Transverse colon (tissue), 4 donors: ENCODE measurements at regions of chr1 and their contacts with region 1.

Region 1: GRCh38 chr1:29197585-29197924 is 15.9 kb upstream of the SRSF4 start:
- DNase-seq: peak; percentile 48
- H3K4me3 ChIP-seq: no peak overlapping the region
- H3K27ac ChIP-seq: peak overlapping the region in 1 of 4 donors; percentile 16
- H3K4me1 ChIP-seq: peaks cover 4 to 15% (median 6%) of the 10 kb centered on the region in 4 donors
- H3K27me3 ChIP-seq: no peaks in the 10 kb centered on the region
- CTCF ChIP-seq: peak; percentile 20 to 56 (median 48)
- EP300 ChIP-seq: no peak
- POLR2A ChIP-seq: no peak

Region 2: DNA sequence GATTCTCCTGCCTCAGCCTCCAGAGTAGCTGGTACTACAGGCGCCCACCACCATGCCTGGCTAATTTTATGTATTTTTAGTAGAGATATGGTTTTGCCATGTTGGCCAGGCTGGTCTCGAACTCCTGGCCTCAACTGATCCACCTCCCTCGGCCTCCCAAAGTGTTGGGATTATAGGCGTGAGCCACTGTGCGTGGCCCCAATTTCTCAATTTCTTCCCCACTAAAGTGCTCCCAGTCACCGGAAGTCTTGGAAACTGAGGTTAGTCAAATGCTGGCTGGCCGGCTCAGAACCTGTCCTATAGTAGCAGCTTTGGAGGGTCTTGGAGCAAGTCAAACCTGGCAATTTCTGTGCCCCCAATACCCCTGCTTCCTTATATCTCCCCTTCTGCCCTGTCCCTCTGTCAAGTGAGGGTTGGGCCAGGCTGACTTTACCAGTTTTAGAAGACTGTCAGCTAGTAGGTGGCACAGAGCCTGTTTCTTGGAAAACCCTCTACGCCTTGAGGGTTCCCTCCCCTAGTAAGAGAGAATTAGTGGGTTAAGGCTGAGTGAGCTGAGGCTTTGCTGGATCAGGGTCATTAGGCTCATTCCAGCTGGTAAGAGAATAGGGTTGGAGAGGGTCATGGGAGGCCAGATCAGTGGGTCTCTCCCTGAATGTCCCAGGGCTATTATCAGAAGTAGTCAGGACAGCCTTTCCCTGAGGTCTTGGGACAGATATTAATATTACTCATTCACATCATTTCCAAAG is 291.5 kb before region 1 on chr1:
- in situ Hi-C with region 1: loop called in 1 of 4 experiments (anchors 10 kb)
- intact Hi-C with region 1: no loop called
- DNase-seq: no peak
- H3K4me3 ChIP-seq: no peak overlapping the region
- H3K27ac ChIP-seq: no peak overlapping the region
- H3K4me1 ChIP-seq: no peaks in the 10 kb centered on the region
- H3K27me3 ChIP-seq: no peaks in the 10 kb centered on the region
- CTCF ChIP-seq: no peak
- EP300 ChIP-seq: no peak
- POLR2A ChIP-seq: no peak

Region 3: DNA sequence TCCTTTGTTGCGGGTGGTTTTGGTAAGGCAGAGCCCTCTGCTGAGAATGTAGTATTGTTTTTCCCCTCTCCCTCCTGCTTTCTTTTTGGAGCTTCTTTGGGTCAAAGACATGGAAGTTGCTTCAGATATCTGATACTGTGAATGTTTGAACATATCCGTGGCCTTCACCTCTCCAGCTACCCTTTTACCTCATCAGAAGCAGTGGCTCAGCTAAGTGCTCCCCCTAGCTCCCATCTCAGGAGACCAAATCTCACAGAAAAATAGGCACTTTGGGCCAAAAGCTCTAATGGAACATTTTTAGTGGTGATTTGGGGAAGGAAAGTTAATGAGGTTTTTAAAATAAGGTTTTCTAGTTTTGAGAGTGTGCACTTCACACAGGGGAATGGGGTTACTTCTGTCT is 80.2 kb before region 1 on chr1:
- in situ Hi-C with region 1: loop called in 1 of 4 experiments (anchors 10 kb)
- intact Hi-C with region 1: no loop called
- DNase-seq: no peak
- H3K4me3 ChIP-seq: no peak overlapping the region
- H3K27ac ChIP-seq: peak overlapping the region in 1 of 4 donors; percentile 97
- H3K4me1 ChIP-seq: peaks cover 3 to 30% (median 15%) of the 10 kb centered on the region in 4 donors
- H3K27me3 ChIP-seq: peaks cover 18% of the 10 kb centered on the region
- CTCF ChIP-seq: no peak
- EP300 ChIP-seq: no peak
- POLR2A ChIP-seq: no peak

Region 4: GRCh38 chr1:29426810-29427209 is 229.3 kb after region 1 on chr1:
- in situ Hi-C with region 1: no loop called
- intact Hi-C with region 1: no loop called
- DNase-seq: no peak
- H3K4me3 ChIP-seq: no peak overlapping the region
- H3K27ac ChIP-seq: no peak overlapping the region
- H3K4me1 ChIP-seq: no peaks in the 10 kb centered on the region
- H3K27me3 ChIP-seq: peaks cover 14% of the 10 kb centered on the region
- CTCF ChIP-seq: no peak
- EP300 ChIP-seq: no peak
- POLR2A ChIP-seq: no peak